ENCODE measurements at regions of chr9 and their contacts with region 1.

Region 1: DNA sequence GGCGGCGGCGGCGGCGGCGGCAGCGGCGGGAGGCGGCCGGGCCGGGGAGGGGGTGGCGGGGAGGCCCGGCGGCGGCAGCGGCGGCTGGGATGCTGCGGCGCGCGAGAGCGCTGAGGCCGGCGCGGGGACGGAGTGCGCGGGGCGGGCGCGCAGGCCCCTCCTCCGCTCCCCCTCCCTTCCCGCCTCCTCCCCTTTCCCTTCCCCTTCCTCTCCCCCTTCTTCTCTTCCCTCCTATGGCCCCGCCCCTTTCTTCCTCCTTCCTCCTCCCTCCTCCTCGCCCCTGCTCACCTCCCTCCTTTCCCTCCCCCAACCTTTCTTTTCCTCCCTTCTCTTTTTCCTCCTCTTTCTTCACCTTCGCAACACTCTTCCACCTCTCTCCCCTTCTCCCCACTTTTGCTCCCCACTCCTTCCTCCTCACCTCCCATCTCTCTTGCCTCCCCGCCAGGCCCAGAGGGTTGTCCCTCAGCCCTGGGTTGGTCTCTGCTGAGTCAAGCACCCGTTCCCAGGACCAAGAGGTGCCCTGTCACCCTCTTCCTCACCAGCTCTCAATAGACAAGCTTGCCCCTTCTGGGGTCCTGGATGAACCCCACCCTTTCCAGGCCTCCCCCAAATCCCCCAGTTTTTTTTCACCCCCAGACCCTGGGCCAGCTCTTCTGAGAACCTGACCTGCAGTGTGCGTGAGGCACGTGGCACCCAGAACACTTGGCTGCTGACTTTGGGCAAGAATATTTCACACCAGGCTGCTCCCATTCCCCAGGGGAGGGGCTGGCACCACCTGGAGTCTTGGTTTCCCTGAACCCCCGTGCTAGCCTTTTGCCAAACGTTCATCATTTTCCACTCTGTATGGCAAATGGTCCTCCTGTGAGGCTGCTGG is at the start of gene SEMA4D:
- DNase-seq: peak; percentile 80
- ATAC-seq: peak; percentile 15
- H3K4me3 Mint-ChIP-seq: peak within 1 kb of the TSS; percentile 94
- H3K27ac Mint-ChIP-seq: peak within 1 kb of the TSS; percentile 93
- H3K4me1 Mint-ChIP-seq: peaks cover 80% of the 10 kb centered on the region
- H3K27me3 Mint-ChIP-seq: no peaks in the 10 kb centered on the region
- total RNA-seq, gene SEMA4D: 408 to 525 TPM

Region 2: DNA sequence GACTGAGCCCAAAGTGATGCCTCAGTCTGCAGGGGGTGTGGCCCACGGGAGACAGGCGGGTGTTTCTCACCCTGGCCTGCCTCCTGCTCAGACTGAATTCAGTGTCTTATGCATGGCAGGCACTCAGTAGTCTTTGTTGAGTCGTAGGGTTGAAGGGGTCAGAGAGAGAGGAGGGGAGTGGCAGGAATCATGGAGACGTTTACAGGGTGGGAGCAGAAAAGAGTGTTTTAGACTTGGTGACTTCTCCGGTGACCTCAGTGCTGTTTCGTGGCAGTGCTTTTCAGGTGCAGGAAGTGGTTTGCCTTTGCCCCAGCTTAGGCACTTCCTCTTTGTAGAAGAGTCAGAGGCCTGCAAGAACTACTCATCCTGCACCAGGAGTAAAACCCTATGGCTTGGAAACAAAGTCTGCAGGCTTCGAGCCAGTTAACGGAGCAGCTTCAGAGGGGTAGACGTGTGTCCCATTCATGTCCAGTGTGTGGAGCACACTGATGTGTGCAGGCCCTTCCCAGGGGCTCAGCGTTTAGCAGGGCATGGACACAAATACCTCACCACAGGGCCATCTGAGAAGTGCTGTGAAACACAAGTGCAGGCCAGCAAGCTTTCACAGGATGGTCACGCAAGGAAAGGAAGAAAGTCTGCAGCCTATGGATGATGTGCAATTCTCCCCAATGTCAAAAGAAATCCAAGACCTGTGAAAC is 24.2 kb after region 1 on chr9:
- CTCF ChIA-PET with region 1: interaction called, 50 read pairs
- DNase-seq: peak; percentile 94
- ATAC-seq: peak; percentile 93
- H3K4me3 Mint-ChIP-seq: peak overlapping the region; percentile 56
- H3K27ac Mint-ChIP-seq: peak overlapping the region; percentile 96
- H3K4me1 Mint-ChIP-seq: peaks cover 97% of the 10 kb centered on the region
- H3K27me3 Mint-ChIP-seq: no peaks in the 10 kb centered on the region

Measured in activated CD8-positive, alpha-beta memory T cell treated with anti-CD3 and anti-CD28 coated beads, Interleukin-2, amount 10 ng/mL, durations not matched to agents 7 days and 5 days (primary cell).